Esophagus muscularis mucosa (tissue), 4 donors: ENCODE measurements at regions of chr14 and their contacts with region 1.

Region 1: GRCh38 chr14:88792572-88793258 is at the start of gene EML5:
- DNase-seq: no peak
- H3K4me3 ChIP-seq: peak within 1 kb of the TSS; percentile 68 to 90 (median 82)
- H3K27ac ChIP-seq: peak within 1 kb of the TSS; percentile 86 to 91 (median 88)
- H3K4me1 ChIP-seq: peaks cover 13 to 27% (median 15%) of the 10 kb centered on the region in 4 donors
- H3K27me3 ChIP-seq: no peaks in the 10 kb centered on the region
- CTCF ChIP-seq: peak; percentile 9 to 55 (median 17)
- EP300 ChIP-seq: no peak
- POLR2A ChIP-seq: no peak
- total RNA-seq, gene EML5: 2.7 to 3.7 (median 3.7) TPM

Region 2: DNA sequence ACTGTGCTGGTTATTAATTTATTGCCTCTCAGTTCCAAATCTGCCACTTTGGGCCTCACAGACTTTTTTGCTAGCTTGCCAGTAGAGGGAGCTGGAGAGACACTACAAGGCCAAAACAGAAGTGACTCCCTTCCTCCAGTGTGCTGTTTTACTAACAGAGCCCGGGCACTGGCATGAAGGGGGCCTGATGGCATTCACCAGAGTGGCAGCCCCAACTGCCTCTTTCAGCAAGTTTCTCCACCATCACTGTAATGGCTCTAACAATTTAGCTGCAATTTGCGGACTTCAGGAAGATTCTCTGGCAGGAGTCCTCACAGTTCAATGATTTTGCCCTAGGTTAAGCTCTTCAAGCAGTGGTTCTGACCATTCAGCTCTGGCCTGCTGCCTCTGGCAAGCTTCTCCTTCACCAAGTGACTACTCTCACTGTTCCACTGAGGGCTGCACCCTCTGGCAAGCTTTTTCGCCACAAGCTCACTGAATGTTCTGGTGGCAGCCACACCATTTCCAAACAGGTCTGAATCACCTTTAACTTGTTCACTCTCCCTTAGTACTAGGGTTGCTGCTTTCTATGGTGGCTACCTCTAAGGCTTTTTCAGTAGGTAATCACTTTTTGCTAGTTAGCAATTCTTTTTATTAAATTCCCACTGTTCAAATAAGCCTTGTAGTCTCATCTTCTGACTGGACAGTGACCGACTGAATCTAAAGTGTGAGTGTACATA is 125.0 kb before region 1 on chr14:
- intact Hi-C with region 1: loop called (anchors 5 kb)
- DNase-seq: no peak
- H3K4me3 ChIP-seq: no peak overlapping the region
- H3K27ac ChIP-seq: peak overlapping the region in 3 of 4 donors; percentile 6 to 33 (median 7)
- H3K4me1 ChIP-seq: peaks cover 0 to 9% (median 8%) of the 10 kb centered on the region in 4 donors
- H3K27me3 ChIP-seq: no peaks in the 10 kb centered on the region
- CTCF ChIP-seq: peak; percentile 73 to 89 (median 75)
- EP300 ChIP-seq: no peak
- POLR2A ChIP-seq: no peak

Region 3: GRCh38 chr14:88729159-88729558 is 63.6 kb before region 1 on chr14:
- intact Hi-C with region 1: no loop called
- DNase-seq: no peak
- H3K4me3 ChIP-seq: no peak overlapping the region
- H3K27ac ChIP-seq: no peak overlapping the region
- H3K4me1 ChIP-seq: no peaks in the 10 kb centered on the region
- H3K27me3 ChIP-seq: no peaks in the 10 kb centered on the region
- CTCF ChIP-seq: peak in 1 of 3 experiments; percentile 18
- EP300 ChIP-seq: no peak
- POLR2A ChIP-seq: no peak

Region 4: DNA sequence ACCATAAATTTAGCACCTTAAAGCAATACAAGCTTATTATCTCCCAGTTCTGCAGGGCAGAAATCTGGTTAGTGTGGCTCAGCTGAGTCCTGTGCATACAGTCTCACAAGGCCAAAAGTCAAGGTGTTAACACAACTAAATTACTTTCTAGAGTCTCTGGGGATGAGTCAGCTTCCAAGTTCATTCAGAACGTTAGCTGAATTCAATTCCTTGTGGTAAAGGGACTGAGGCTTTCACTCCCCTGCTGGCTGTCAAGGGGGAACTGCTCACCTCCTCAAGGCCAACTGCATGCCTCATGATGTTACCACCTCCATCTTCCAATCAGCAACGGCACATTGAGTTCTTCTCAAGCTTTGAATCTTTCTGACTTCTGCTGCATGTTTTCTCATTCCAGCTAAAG is 27.6 kb before region 1 on chr14:
- intact Hi-C with region 1: no loop called
- DNase-seq: no peak
- H3K4me3 ChIP-seq: no peak overlapping the region
- H3K27ac ChIP-seq: no peak overlapping the region
- H3K4me1 ChIP-seq: no peaks in the 10 kb centered on the region
- H3K27me3 ChIP-seq: no peaks in the 10 kb centered on the region
- CTCF ChIP-seq: no peak
- EP300 ChIP-seq: no peak
- POLR2A ChIP-seq: no peak

Region 5: DNA sequence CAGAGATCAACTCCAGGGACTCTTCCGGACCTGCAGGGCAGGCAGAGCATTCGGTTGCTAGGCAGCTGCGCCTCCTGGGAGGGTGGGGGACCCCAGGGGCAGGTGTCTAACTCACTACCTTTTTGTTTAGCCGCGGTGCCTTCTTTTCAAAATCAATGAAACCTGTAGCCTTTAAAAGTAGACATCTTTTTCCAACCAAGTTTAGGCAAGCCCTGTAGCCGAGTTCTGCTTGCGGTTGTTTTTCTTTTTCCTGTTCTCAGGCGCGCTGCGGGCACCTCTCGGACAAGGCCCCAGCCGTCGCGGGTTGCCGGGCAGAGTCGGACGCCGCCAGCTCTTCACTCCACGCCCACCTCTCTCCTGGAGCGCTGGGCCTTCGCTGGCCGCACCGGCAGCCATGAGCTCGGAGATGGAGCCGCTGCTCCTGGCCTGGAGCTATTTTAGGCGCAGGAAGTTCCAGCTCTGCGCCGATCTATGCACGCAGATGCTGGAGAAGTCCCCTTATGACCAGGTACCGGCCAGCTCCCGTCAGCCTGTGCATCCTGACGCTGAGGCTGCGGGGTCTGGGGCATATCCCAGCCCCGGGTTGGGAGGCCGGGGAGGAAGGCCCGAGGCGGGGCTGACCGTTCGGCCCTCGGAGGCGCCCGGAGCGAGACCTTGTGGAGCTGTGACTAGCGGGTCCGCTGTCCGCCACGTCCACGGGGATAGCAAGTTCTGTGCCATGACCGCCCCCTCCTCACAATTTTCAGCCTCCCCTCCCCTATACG is 31.8 kb after region 1 on chr14 and contains the start of gene TTC8:
- intact Hi-C with region 1: loop called (anchors 5 kb)
- DNase-seq: peak; percentile 95
- H3K4me3 ChIP-seq: peak within 1 kb of the TSS; percentile 68 to 80 (median 75)
- H3K27ac ChIP-seq: peak within 1 kb of the TSS; percentile 83 to 86 (median 84)
- H3K4me1 ChIP-seq: peaks cover 4 to 35% (median 23%) of the 10 kb centered on the region in 4 donors
- H3K27me3 ChIP-seq: no peaks in the 10 kb centered on the region
- CTCF ChIP-seq: peak in 1 of 3 experiments; percentile 10
- EP300 ChIP-seq: no peak
- POLR2A ChIP-seq: no peak
- total RNA-seq, gene TTC8: 16.4 to 29.9 (median 23.7) TPM